Sigmoid colon (tissue), 7 donors: ENCODE measurements at regions of chr15 and their contacts with region 1.

Region 1: GRCh38 chr15:67884514-67885487 is 45.0 kb upstream of the RNU6-1 start:
- DNase-seq: peak; percentile 93
- H3K4me3 ChIP-seq: peak overlapping the region; percentile 29 to 60 (median 54)
- H3K27ac ChIP-seq: peak overlapping the region; percentile 82 to 90 (median 86)
- H3K4me1 ChIP-seq: peaks cover 0 to 37% (median 30%) of the 10 kb centered on the region in 4 donors
- H3K27me3 ChIP-seq: no peaks in the 10 kb centered on the region
- CTCF ChIP-seq: no peak
- EP300 ChIP-seq: peak in 2 of 4 donors; percentile 4 to 63
- POLR2A ChIP-seq: no peak

Region 2: GRCh38 chr15:67731112-67731761 is 153.6 kb before region 1 on chr15:
- intact Hi-C with region 1: no loop called
- DNase-seq: no peak
- H3K4me3 ChIP-seq: no peak overlapping the region
- H3K27ac ChIP-seq: no peak overlapping the region
- H3K4me1 ChIP-seq: no peaks in the 10 kb centered on the region
- H3K27me3 ChIP-seq: no peaks in the 10 kb centered on the region
- CTCF ChIP-seq: no peak
- EP300 ChIP-seq: no peak
- POLR2A ChIP-seq: no peak

Region 3: GRCh38 chr15:67922971-67923945 is 38.5 kb after region 1 on chr15:
- intact Hi-C with region 1: loop called (anchors 5 kb)
- DNase-seq: no peak
- H3K4me3 ChIP-seq: no peak overlapping the region
- H3K27ac ChIP-seq: peak overlapping the region; percentile 3 to 44 (median 36)
- H3K4me1 ChIP-seq: peaks cover 0 to 40% (median 36%) of the 10 kb centered on the region in 4 donors
- H3K27me3 ChIP-seq: no peaks in the 10 kb centered on the region
- CTCF ChIP-seq: no peak
- EP300 ChIP-seq: peak in 1 of 4 donors; percentile 5
- POLR2A ChIP-seq: no peak

Region 4: GRCh38 chr15:68229386-68230156 is 344.8 kb after region 1 on chr15 and contains the start of gene CLN6:
- intact Hi-C with region 1: no loop called
- DNase-seq: peak; percentile 90
- H3K4me3 ChIP-seq: peak within 1 kb of the TSS; percentile 66 to 94 (median 69)
- H3K27ac ChIP-seq: peak within 1 kb of the TSS; percentile 79 to 89 (median 84)
- H3K4me1 ChIP-seq: peaks cover 0 to 25% (median 23%) of the 10 kb centered on the region in 4 donors
- H3K27me3 ChIP-seq: no peaks in the 10 kb centered on the region
- CTCF ChIP-seq: no peak
- EP300 ChIP-seq: no peak
- POLR2A ChIP-seq: no peak
- total RNA-seq, gene CLN6: 9.3 to 17.4 (median 12.7) TPM